ENCODE measurements at regions of chr1 and their contacts with region 1.

Region 1: GRCh38 chr1:231983588-231984193 is 357.1 kb downstream of the DISC1 start:
- DNase-seq: no peak
- H3K4me3 ChIP-seq: no peak overlapping the region
- H3K27ac ChIP-seq: no peak overlapping the region
- H3K4me1 ChIP-seq: no peaks in the 10 kb centered on the region
- H3K27me3 ChIP-seq: no peaks in the 10 kb centered on the region
- CTCF ChIP-seq: no peak

Region 2: GRCh38 chr1:231918239-231919015 is 65.3 kb before region 1 on chr1:
- CTCF ChIA-PET with region 1: no interaction called
- dilution Hi-C with region 1: no loop called
- in situ Hi-C with region 1: no loop called
- intact Hi-C with region 1: no loop called
- DNase-seq: peak; percentile 67
- H3K4me3 ChIP-seq: no peak overlapping the region
- H3K27ac ChIP-seq: peak overlapping the region; percentile 39
- H3K4me1 ChIP-seq: peaks cover 36% of the 10 kb centered on the region
- H3K27me3 ChIP-seq: no peaks in the 10 kb centered on the region
- CTCF ChIP-seq: no peak

Region 3: GRCh38 chr1:232764458-232765251 is 781.0 kb after region 1 on chr1:
- CTCF ChIA-PET with region 1: interaction called, 13 read pairs
- dilution Hi-C with region 1: no loop called
- in situ Hi-C with region 1: no loop called
- intact Hi-C with region 1: no loop called
- DNase-seq: no peak
- H3K4me3 ChIP-seq: no peak overlapping the region
- H3K27ac ChIP-seq: no peak overlapping the region
- H3K4me1 ChIP-seq: peaks cover 10% of the 10 kb centered on the region
- H3K27me3 ChIP-seq: no peaks in the 10 kb centered on the region
- CTCF ChIP-seq: no peak